ENCODE measurements at regions of chr11 and their contacts with region 1.

Region 1: GRCh38 chr11:10307442-10308207 is 2.8 kb downstream of the ADM start:
- DNase-seq: peak; percentile 88 to 94
- H3K4me3 ChIP-seq: peak overlapping the region; percentile 57 to 58
- H3K27ac ChIP-seq: peak overlapping the region; percentile 72 to 79
- H3K4me1 ChIP-seq: peaks cover 0 to 60% (median 40%) of the 10 kb centered on the region in 4 donors
- H3K27me3 ChIP-seq: no peaks in the 10 kb centered on the region
- CTCF ChIP-seq: peak; percentile 97 to 100

Region 2: DNA sequence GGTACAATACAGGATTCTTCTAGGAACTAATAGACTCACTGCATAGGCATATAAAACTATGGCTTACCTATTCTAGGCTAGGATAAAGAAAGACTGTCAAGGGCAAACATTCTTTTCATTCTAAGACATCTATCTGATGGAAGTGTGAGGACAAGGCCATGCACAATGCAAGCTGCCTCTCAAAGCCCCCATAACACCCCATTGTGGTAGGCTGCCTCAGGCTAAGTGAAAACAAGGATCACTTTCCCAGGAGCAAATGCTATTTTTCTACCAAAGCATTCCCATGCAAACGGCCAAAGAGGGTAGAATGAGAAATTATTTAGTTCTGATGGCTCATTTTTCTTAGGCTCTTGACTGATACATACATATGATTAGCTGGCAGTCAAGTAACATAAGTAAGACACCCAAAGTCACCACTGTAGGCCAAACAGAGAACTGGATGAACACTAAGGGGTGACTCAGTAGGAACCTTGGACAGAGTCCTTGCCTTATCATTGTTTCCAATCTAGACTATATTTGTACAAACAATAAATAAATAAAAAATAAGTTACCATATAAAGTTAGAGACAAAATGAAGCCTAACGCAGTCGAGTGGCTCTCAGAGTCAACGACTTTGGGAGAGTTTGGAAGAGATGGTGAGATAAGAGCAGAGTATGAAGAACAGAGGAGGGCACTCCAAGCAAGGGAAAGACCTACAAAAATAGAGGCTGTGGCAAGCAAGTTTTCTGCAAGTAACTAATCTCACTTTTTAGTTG is 317.2 kb before region 1 on chr11:
- intact Hi-C with region 1: loop called (anchors 5 kb)
- DNase-seq: no peak
- H3K4me3 ChIP-seq: no peak overlapping the region
- H3K27ac ChIP-seq: no peak overlapping the region
- H3K4me1 ChIP-seq: no peaks in the 10 kb centered on the region
- H3K27me3 ChIP-seq: no peaks in the 10 kb centered on the region
- CTCF ChIP-seq: peak in 1 of 2 experiments; percentile 24

Region 3: DNA sequence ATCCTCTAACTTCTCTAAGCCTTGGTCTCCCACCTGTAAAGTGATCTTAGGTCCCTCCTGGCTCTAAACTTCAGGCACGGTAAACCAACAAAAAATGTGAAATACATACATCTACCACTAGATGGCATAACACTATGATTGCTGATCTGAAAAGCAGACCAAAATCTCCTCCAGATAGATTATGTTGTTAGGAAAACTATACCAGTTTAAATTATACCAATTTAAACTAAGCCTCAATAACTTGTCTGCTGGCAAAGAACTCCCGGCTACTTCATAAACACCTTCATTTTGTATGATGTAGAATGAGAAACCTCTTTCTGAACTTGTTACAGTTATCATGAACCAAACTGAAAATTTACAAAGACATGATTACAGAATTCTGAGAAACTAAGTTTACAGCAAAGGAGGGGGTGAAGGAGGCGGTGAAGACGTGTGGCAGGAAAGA is 99.5 kb before region 1 on chr11:
- intact Hi-C with region 1: loop called (anchors 5 kb)
- DNase-seq: no peak
- H3K4me3 ChIP-seq: no peak overlapping the region
- H3K27ac ChIP-seq: peak overlapping the region in 1 of 2 donors; percentile 43
- H3K4me1 ChIP-seq: peaks cover 0 to 18% (median 0%) of the 10 kb centered on the region in 4 donors
- H3K27me3 ChIP-seq: no peaks in the 10 kb centered on the region
- CTCF ChIP-seq: peak; percentile 68 to 71

Measured in tibial artery (tissue), 4 donors.